RWPE1 (cell line): ENCODE measurements at regions of chr1 and their contacts with region 1.

Region 1: DNA sequence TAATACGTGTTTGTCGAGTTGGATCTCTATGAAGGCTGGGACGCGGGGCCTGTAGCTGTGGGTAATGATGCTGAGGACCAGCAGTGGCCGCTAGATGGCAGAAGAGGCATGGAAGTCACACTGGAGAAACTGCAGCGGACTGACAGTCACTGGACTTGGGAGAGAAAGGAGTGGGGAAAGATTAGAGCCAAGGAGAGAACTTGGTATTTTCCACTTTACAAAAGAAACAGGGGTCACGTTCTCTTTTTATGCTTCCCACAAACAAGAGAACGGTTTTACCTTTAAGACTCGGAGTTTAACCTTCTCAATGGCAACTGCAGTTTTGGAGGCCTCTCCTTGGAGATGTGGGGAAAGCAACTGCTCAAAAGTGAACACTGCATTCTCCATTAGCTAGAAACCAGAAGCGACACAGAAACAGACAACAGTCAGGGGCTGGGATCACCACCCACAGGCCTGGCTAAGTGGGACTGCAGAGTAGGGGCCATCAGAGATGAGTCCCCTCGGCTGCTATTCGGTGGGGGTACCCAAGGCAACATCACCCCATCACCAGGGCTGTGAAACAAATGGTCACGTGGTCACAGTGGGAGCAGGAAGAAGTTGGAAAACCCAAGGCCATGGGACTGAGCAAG is 51.1 kb upstream of the EDEM3 start:
- DNase-seq: peak; percentile 83
- H3K27ac ChIP-seq: no peak overlapping the region
- CTCF ChIP-seq: peak; percentile 91

Region 2: GRCh38 chr1:184840596-184840995 is 34.8 kb after region 1 on chr1:
- CTCF ChIA-PET with region 1: no interaction called
- POLR2A ChIA-PET with region 1: interaction called, 16 read pairs
- DNase-seq: no peak
- H3K27ac ChIP-seq: no peak overlapping the region
- CTCF ChIP-seq: no peak

Region 3: DNA sequence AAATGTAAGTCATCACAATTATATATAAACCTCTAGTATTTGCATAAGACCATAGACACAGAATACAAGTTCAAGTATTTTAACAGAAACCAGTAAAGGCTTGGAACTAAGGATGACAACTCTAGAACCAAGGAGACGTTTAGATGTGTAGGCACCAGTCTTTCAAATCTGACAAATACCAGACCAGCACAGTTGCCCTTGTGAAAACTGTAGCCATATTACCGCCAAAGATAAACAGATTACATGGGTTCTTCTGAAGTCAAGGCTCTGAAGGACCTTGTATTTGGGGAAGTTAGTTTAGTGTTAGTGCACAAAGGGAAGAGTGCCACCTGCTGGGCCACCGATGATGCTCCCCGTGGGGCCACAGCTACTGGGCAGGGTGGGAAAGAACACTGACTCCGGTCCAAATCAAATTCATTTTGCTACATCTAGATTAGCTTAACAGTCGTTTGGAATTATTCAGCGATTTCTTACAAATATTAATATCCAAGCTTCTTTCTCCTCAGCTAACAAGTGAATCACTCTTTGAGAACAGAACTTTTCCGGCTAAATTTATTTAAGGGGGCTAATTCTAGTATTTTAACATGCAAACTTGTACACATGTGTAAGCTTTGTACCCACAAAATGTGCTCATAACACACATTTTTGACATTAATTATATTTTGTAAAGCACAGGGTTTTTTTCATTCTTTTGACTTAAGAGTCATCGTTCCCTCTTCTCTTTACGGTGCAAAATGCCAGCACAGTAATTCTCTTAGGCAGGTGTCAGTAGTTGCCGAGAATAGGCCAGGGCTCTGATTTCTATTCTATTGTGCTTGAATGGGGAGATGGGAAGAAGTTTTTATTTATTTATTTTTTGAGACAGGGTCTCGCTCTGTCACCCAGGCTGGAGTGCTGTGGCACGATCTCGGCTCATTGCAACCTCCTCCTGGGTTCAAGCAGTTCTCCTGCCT is 176.5 kb after region 1 on chr1:
- CTCF ChIA-PET with region 1: interaction called, 34 read pairs
- POLR2A ChIA-PET with region 1: no interaction called
- DNase-seq: peak; percentile 60
- H3K27ac ChIP-seq: no peak overlapping the region
- CTCF ChIP-seq: peak; percentile 91